Activated CD4-positive, alpha-beta memory T cell treated with anti-CD3 and anti-CD28 coated beads for 36 hours (primary cell): ENCODE measurements at regions of chr17 and their contacts with region 1.

Region 1: DNA sequence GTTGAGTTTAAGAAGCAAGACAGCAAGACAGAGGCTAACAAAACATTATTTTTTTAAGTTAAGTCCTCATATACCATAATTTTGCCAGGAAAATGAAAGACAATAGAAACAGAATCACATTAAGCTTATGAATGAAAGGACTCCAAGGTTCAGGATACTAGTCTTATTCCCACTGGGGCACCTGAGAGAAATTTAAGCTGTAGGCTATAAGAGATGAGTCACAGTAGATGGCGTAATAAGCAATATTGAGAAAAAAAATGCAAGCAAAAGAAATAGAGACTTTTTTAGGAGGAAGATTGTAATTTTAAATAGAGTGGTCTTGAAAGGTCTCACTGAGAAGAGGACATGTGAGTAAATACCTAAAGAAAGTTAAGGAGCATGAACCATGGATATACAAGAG is 57.1 kb upstream of the KIF2B start:
- DNase-seq: no peak
- H3K4me3 Mint-ChIP-seq: no peak overlapping the region
- H3K27ac Mint-ChIP-seq: no peak overlapping the region
- H3K4me1 Mint-ChIP-seq: no peaks in the 10 kb centered on the region
- H3K27me3 Mint-ChIP-seq: no peaks in the 10 kb centered on the region

Region 2: DNA sequence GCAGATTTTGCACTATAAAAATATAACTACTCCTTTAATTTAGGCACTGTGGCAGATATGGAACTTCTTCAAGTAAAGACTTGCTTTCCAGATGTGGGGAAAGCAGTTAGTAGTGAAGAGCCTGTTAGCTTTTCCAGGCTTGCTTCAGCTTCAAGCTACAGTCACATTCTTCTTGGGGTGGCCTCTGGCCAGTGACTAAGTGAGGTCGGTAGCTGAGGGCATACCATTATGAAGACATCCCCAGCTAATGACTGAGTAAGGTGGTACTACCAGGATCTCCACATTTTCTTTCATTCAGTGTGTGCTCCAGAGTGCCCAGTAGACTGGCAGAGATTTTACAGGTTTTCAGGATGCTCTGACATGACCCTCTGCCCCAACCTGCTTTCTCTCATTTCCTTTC is 110.0 kb before region 1 on chr17:
- CTCF ChIA-PET with region 1: no interaction called
- POLR2A ChIA-PET with region 1: no interaction called
- intact Hi-C with region 1: no loop called
- DNase-seq: no peak
- H3K4me3 Mint-ChIP-seq: no peak overlapping the region
- H3K27ac Mint-ChIP-seq: no peak overlapping the region
- H3K4me1 Mint-ChIP-seq: no peaks in the 10 kb centered on the region
- H3K27me3 Mint-ChIP-seq: no peaks in the 10 kb centered on the region

Region 3: GRCh38 chr17:53780320-53780719 is 14.7 kb after region 1 on chr17:
- CTCF ChIA-PET with region 1: no interaction called
- POLR2A ChIA-PET with region 1: no interaction called
- intact Hi-C with region 1: loop called (anchors 2 kb)
- DNase-seq: no peak
- H3K4me3 Mint-ChIP-seq: no peak overlapping the region
- H3K27ac Mint-ChIP-seq: no peak overlapping the region
- H3K4me1 Mint-ChIP-seq: no peaks in the 10 kb centered on the region
- H3K27me3 Mint-ChIP-seq: no peaks in the 10 kb centered on the region